ENCODE measurements at regions of chr13 and their contacts with region 1.

Region 1: DNA sequence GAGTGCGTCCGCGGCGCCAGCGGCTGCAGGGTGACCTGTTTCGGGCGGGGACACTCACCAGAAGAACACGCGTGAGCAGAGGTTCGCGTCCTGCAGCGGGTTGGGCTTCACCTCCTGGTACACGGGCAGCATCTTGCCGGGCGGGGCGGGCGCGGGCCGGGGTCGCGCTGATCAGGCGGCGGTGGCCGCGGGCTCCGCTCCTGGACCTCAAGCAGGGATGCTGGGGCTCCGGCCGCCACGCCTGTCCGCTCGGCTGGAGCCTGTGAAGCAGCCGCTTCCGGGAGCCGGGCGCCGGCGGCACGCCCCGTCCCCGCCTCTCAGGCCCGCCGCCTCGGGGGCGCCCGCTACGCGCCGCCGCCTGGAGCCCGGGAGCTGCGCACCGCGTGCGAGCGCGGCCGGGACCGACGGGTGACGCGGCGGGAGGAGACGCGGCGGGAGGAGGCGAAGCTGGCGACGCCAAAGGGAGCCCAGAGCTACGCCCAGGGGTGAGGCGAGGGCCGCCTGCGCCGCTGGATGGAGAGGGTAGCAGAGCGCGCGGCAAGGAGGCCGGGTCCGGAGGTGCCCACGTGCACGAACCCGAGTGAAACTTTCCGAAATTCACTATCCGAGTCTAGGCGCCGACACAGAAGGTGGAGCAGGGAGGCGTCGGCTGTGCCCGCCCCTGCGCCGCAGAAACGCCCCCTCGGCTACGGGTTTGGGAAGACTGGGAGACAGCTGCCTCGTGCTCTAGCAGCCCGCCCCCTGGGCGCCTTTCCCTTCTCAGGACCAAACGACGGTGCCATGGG is at the start of gene ABCC4:
- DNase-seq: no peak
- ATAC-seq: peak; percentile 86
- H3K4me3 ChIP-seq: peak within 1 kb of the TSS; percentile 94
- H3K27ac ChIP-seq: peak within 1 kb of the TSS; percentile 89
- H3K4me1 ChIP-seq: peaks cover 14% of the 10 kb centered on the region
- H3K27me3 ChIP-seq: no peaks in the 10 kb centered on the region
- CTCF ChIP-seq: no peak; a peak in 1 of 6 replicates
- EP300 ChIP-seq: no peak
- POLR2A ChIP-seq: peak; percentile 88
- RAD21 ChIP-seq: 0 out of 2 replicates have a peak, but pooled peaks have one; percentile 1
- polyA plus RNA-seq, gene ABCC4: 7.2 to 8.0 TPM

Region 2: DNA sequence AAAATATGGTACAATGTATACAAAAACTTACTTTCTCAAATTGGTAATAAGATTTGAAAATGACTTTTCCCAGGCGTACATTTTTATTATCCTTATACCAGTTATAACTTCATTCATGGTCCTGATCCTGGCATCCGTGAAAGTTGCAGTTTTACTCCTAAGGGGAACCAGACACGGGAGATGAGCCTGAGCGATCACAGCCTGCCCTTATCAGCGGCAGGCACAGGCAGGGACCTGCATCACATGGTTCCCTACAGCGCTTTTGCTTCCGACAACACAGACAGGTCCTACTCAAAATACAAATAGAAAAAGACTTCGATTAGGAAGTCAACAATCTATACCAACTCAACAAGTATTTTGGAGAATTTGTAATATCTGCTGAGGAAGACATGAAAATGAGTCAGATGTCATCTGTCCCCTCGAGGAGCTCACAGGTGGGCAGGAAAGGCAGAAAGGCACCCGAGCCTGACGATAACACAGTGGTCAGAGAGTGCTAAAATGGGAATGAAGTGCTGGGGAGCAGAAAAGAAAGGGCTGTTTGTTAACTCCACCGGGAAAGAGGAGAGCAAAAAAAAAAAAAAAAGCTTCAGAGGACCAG is 93.5 kb before region 1 on chr13:
- CTCF ChIA-PET with region 1: interaction called, 10 read pairs
- POLR2A ChIA-PET with region 1: interaction called, 4 read pairs
- RAD21 ChIA-PET with region 1: interaction called, 10 read pairs
- SMC1A ChIA-PET with region 1: interaction called, 22 read pairs
- in situ Hi-C with region 1: no loop called
- intact Hi-C with region 1: no loop called
- DNase-seq: no peak
- ATAC-seq: peak; percentile 95
- H3K4me3 ChIP-seq: peak overlapping the region; percentile 58; the same call in 1 of the 2 replicates
- H3K27ac ChIP-seq: peak overlapping the region; percentile 59
- H3K4me1 ChIP-seq: peaks cover 8% of the 10 kb centered on the region
- H3K27me3 ChIP-seq: no peaks in the 10 kb centered on the region
- CTCF ChIP-seq: no peak
- EP300 ChIP-seq: no peak
- POLR2A ChIP-seq: no peak
- RAD21 ChIP-seq: no peak

Region 3: DNA sequence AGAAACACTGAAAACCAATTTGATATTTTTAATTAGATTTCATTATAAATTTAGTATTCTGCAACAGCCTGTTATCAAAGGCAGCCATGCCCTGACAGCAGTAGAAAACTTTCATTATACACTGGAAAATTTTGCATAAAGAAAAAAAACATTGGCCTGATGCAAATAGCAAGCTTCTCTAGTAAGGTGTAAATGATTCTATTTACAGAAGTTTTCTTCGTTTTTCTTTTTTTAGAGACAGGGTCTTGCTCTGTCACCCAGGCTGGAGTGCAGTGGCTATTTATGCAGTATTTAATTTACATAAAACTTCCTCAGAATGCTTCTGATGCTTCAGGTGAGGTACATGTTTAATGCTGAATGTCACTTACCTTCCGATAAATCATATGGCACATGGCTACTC is 67.1 kb before region 1 on chr13:
- CTCF ChIA-PET with region 1: interaction called, 107 read pairs
- POLR2A ChIA-PET with region 1: interaction called, 4 read pairs
- RAD21 ChIA-PET with region 1: interaction called, 79 read pairs
- SMC1A ChIA-PET with region 1: interaction called, 10 read pairs
- in situ Hi-C with region 1: no loop called
- intact Hi-C with region 1: no loop called
- DNase-seq: no peak
- ATAC-seq: peak; percentile 68
- H3K4me3 ChIP-seq: peak overlapping the region; percentile 43; the same call in 1 of the 2 replicates
- H3K27ac ChIP-seq: peak overlapping the region; percentile 49; the same call in 1 of the 2 replicates
- H3K4me1 ChIP-seq: peaks cover 29% of the 10 kb centered on the region
- H3K27me3 ChIP-seq: no peaks in the 10 kb centered on the region
- CTCF ChIP-seq: no peak
- EP300 ChIP-seq: no peak; a peak in 1 of 4 replicates
- POLR2A ChIP-seq: no peak
- RAD21 ChIP-seq: no peak

Region 4: GRCh38 chr13:95256086-95256485 is 45.3 kb before region 1 on chr13:
- CTCF ChIA-PET with region 1: interaction called, 24 read pairs
- POLR2A ChIA-PET with region 1: interaction called, 37 read pairs
- RAD21 ChIA-PET with region 1: interaction called, 54 read pairs
- SMC1A ChIA-PET with region 1: interaction called, 24 read pairs
- in situ Hi-C with region 1: no loop called
- intact Hi-C with region 1: loop called (anchors 2 kb)
- DNase-seq: no peak
- ATAC-seq: no peak
- H3K4me3 ChIP-seq: no peak overlapping the region
- H3K27ac ChIP-seq: 0 out of 2 replicates have a peak overlapping the region, but pooled peaks have one; percentile 22
- H3K4me1 ChIP-seq: peaks cover 64% of the 10 kb centered on the region
- H3K27me3 ChIP-seq: no peaks in the 10 kb centered on the region
- CTCF ChIP-seq: no peak
- EP300 ChIP-seq: no peak
- POLR2A ChIP-seq: no peak
- RAD21 ChIP-seq: no peak

Region 5: GRCh38 chr13:95275322-95276036 is 25.9 kb before region 1 on chr13:
- CTCF ChIA-PET with region 1: interaction called, 18 read pairs
- POLR2A ChIA-PET with region 1: interaction called, 4 read pairs
- RAD21 ChIA-PET with region 1: interaction called, 20 read pairs
- SMC1A ChIA-PET with region 1: interaction called, 7 read pairs
- in situ Hi-C with region 1: no loop called
- intact Hi-C with region 1: no loop called
- DNase-seq: no peak
- ATAC-seq: no peak
- H3K4me3 ChIP-seq: no peak overlapping the region
- H3K27ac ChIP-seq: peak overlapping the region; percentile 29; the same call in 1 of the 2 replicates
- H3K4me1 ChIP-seq: peaks cover 20% of the 10 kb centered on the region
- H3K27me3 ChIP-seq: no peaks in the 10 kb centered on the region
- CTCF ChIP-seq: no peak
- EP300 ChIP-seq: no peak
- POLR2A ChIP-seq: no peak
- RAD21 ChIP-seq: no peak

Region 6: DNA sequence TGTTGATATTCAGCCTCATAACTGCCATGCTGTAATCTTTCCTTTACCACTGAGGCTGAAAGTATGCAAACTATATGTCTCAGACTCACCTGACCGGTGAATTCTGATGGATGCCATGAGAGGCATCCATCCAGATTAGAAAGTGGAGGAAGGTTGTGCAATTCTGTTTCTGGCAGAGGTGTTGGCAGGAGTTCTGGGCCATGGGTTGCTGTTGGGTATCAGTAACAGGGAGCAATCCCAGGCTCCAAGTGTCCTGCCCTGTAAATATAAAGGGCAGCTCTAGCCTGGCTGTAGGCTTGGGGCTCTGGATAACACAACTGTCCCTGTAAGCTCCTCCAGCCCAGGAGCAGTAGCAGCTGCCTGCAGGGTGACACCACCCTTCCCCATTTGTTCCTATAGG is 77.2 kb after region 1 on chr13:
- CTCF ChIA-PET with region 1: interaction called, 122 read pairs
- POLR2A ChIA-PET with region 1: interaction called, 4 read pairs
- RAD21 ChIA-PET with region 1: interaction called, 71 read pairs
- SMC1A ChIA-PET with region 1: interaction called, 92 read pairs
- in situ Hi-C with region 1: no loop called
- intact Hi-C with region 1: loop called (anchors 1 kb)
- DNase-seq: no peak
- ATAC-seq: no peak
- H3K4me3 ChIP-seq: no peak overlapping the region
- H3K27ac ChIP-seq: no peak overlapping the region
- H3K4me1 ChIP-seq: peaks cover 16% of the 10 kb centered on the region
- H3K27me3 ChIP-seq: no peaks in the 10 kb centered on the region
- CTCF ChIP-seq: no peak
- EP300 ChIP-seq: no peak
- POLR2A ChIP-seq: no peak
- RAD21 ChIP-seq: no peak